GM10248 (cell line): ENCODE measurements at regions of chr1 and their contacts with region 1.

Region 1: DNA sequence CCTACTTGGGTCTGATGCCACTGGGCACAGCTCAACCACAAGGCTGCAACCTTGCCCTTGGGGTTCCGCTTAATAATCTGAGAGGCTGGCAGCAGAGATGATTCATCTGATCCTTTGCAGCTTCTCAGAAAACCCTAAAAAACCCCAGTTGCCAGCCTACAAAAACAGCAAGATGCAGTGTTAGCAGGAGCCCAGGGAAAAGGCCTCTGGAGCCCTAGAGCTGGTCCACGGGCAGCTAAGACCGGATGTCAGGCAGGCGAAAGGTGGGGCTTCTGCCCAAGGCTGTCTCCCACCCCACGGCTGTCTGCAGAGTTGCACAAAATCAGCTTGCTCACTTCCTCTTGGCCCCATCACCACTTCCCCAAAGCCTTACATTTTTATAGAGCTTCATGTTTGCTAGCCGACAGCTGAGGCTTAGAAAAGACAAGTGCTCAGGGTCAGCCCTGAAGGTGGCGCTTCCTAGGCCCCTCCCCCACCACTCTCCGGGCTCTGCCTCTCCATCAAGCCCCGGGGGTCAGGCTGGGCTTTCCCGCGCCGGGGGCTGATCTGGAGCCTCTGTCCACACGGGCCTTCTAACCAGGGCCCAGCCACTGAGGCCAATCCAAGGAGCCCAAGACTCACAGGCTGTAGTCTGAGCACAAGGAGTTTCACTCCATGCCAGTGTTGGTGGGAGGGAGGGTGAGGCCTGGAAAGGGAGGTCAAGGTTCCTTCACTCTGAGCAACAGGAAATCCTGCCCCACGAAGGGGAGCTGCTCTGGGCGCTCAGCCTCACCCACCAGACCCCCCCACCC is 4.2 kb upstream of the ADORA3 start:
- DNase-seq: peak; percentile 73
- CTCF ChIP-seq: no peak

Region 2: DNA sequence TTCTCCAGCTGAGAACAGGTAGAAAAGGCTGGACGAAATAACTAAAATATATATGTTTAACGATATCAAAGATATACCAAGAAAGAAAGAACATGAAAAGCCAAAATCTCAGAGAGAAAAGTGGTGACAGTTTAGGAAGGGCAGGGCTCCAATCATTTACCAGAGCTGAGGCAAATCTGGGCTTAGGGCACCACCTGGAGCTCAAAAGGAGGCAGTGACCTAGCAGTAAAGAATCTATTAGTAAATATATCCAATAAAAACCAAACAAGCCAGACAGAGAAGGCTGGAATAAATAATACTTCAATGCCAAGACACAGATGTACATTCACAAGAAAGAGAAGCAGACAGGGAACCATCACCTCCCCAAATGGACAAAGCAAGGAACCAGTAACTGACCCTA is 173.4 kb before region 1 on chr1:
- CTCF ChIA-PET with region 1: no interaction called
- POLR2A ChIA-PET with region 1: no interaction called
- DNase-seq: peak; percentile 57
- CTCF ChIP-seq: peak; percentile 58

Region 3: GRCh38 chr1:111489604-111490003 is 18.0 kb before region 1 on chr1:
- CTCF ChIA-PET with region 1: interaction called, 84 read pairs
- POLR2A ChIA-PET with region 1: no interaction called
- DNase-seq: no peak
- CTCF ChIP-seq: no peak

Region 4: GRCh38 chr1:111570781-111571181 is 63.2 kb after region 1 on chr1:
- CTCF ChIA-PET with region 1: interaction called, 16 read pairs
- POLR2A ChIA-PET with region 1: no interaction called
- DNase-seq: peak; percentile 38
- CTCF ChIP-seq: peak; percentile 30

Region 5: GRCh38 chr1:111628153-111628552 is 120.5 kb after region 1 on chr1:
- CTCF ChIA-PET with region 1: interaction called, 47 read pairs
- POLR2A ChIA-PET with region 1: no interaction called
- DNase-seq: no peak
- CTCF ChIP-seq: no peak

Region 6: DNA sequence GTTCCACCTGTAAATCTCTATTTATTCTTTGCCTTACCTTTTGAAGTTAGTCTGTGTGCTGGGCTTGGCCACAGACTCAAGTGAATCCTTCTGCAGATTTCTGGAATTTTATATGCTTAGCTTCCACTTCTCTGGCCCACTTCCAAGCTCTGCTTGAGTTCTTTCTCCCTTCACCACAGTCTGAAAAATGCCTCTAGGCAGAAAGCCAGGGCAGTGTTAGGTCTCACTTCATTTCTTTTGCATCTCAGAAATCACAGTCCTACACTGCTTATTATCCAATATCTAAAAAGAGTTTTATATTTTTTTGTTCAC is 182.7 kb after region 1 on chr1:
- CTCF ChIA-PET with region 1: interaction called, 26 read pairs
- POLR2A ChIA-PET with region 1: no interaction called
- DNase-seq: no peak
- CTCF ChIP-seq: no peak

Region 7: GRCh38 chr1:111739194-111739924 is 231.8 kb after region 1 on chr1 and contains the start of gene INKA2:
- CTCF ChIA-PET with region 1: interaction called, 53 read pairs
- POLR2A ChIA-PET with region 1: no interaction called
- DNase-seq: peak; percentile 94
- CTCF ChIP-seq: no peak